Naive thymus-derived CD4-positive, alpha-beta T cell (primary cell): ENCODE measurements at regions of chr9 and their contacts with region 1.

Region 1: GRCh38 chr9:121686930-121687541 is 35.6 kb downstream of the DAB2IP start:
- DNase-seq: peak in 4 of 9 donors; percentile 15 to 71 (median 28)
- ATAC-seq: peak; percentile 65
- H3K4me3 ChIP-seq: no peak overlapping the region
- H3K4me3 Mint-ChIP-seq: no peak overlapping the region
- H3K27ac ChIP-seq: no peak overlapping the region
- H3K27ac Mint-ChIP-seq: peak overlapping the region in 1 of 9 donors; percentile 2
- H3K4me1 ChIP-seq: no peaks in the 10 kb centered on the region
- H3K4me1 Mint-ChIP-seq: peaks cover 0 to 4% (median 0%) of the 10 kb centered on the region in 7 donors
- H3K27me3 ChIP-seq: no peaks in the 10 kb centered on the region
- H3K27me3 Mint-ChIP-seq: peaks cover 5 to 12% (median 8%) of the 10 kb centered on the region in 5 donors

Region 2: DNA sequence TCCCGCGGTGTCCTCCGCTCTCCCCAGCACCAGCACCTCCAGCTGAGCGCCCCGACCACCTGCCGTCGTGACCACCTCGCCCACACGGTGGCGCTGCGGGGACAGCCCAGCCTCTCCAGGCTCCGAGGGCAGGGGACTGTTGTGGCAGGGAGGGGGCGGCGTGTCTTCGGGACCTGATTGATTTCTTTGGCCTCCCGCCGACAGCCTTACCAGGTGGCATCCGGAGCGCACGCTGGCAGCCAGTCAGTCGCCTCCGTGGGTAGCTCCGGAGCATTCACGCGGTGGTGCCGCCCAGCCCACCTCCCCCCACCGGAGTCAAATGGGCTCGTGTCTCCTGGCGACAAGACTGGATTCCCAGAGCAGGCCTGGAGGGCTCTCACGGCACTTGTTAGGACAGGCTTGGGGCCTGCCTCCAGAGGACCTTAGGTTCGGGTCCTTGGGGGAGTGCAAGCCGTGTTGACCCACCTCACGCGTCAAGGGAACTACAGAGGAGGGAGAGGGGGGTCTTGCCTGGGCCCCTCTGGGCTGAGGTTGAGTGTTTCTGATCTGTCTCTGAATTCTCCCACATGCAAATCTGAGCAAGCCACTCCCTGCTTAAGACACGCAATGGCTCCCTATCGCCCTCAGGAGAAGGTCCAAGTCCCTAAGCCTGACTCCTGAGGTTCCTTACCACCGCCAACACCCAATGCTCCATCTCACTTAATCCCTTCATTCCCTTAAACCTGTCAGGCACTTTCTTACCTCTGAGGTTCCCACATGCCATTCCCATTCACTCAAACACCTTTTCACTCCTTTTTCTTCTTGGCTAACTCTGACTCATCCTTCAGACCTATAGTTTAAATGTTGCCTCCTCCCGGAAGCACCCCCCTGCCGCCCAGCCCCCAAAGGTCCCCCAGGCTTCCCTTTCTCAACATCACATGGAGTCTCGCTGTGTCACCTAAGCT is 136.2 kb before region 1 on chr9:
- CTCF ChIA-PET with region 1: no interaction called
- POLR2A ChIA-PET with region 1: no interaction called
- intact Hi-C with region 1: loop called in 1 of 2 experiments (anchors 10 kb)
- DNase-seq: peak; percentile 26 to 79 (median 65)
- ATAC-seq: peak; percentile 84
- H3K4me3 ChIP-seq: no peak overlapping the region
- H3K4me3 Mint-ChIP-seq: peak overlapping the region in 7 of 10 donors; percentile 16 to 65 (median 37)
- H3K27ac ChIP-seq: no peak overlapping the region
- H3K27ac Mint-ChIP-seq: no peak overlapping the region
- H3K4me1 ChIP-seq: no peaks in the 10 kb centered on the region
- H3K4me1 Mint-ChIP-seq: peaks cover 0 to 12% (median 6%) of the 10 kb centered on the region in 7 donors
- H3K27me3 ChIP-seq: no peaks in the 10 kb centered on the region
- H3K27me3 Mint-ChIP-seq: peaks cover 20 to 54% (median 35%) of the 10 kb centered on the region in 5 donors

Region 3: GRCh38 chr9:121735065-121735789 is 48.2 kb after region 1 on chr9:
- CTCF ChIA-PET with region 1: no interaction called
- POLR2A ChIA-PET with region 1: no interaction called
- intact Hi-C with region 1: loop called in 1 of 2 experiments (anchors 5 kb)
- DNase-seq: no peak
- ATAC-seq: no peak
- H3K4me3 ChIP-seq: no peak overlapping the region
- H3K4me3 Mint-ChIP-seq: peak overlapping the region in 4 of 10 donors; percentile 14 to 61 (median 49)
- H3K27ac ChIP-seq: no peak overlapping the region
- H3K27ac Mint-ChIP-seq: peak overlapping the region in 2 of 9 donors; percentile 21 to 43
- H3K4me1 ChIP-seq: peaks cover 0 to 21% of the 10 kb centered on the region in 2 donors
- H3K4me1 Mint-ChIP-seq: peaks cover 4 to 21% (median 5%) of the 10 kb centered on the region in 7 donors
- H3K27me3 ChIP-seq: no peaks in the 10 kb centered on the region
- H3K27me3 Mint-ChIP-seq: peaks cover 27 to 67% (median 32%) of the 10 kb centered on the region in 5 donors

Region 4: GRCh38 chr9:121992571-121993212 is 305.7 kb after region 1 on chr9:
- CTCF ChIA-PET with region 1: no interaction called
- POLR2A ChIA-PET with region 1: no interaction called
- intact Hi-C with region 1: loop called in 1 of 2 experiments (anchors 1 kb)
- DNase-seq: peak in 6 of 9 donors; percentile 10 to 65 (median 49)
- ATAC-seq: peak; percentile 62
- H3K4me3 ChIP-seq: no peak overlapping the region
- H3K4me3 Mint-ChIP-seq: no peak overlapping the region
- H3K27ac ChIP-seq: no peak overlapping the region
- H3K27ac Mint-ChIP-seq: no peak overlapping the region
- H3K4me1 ChIP-seq: no peaks in the 10 kb centered on the region
- H3K4me1 Mint-ChIP-seq: no peaks in the 10 kb centered on the region
- H3K27me3 ChIP-seq: no peaks in the 10 kb centered on the region
- H3K27me3 Mint-ChIP-seq: no peaks in the 10 kb centered on the region